ENCODE measurements at regions of chr13 and their contacts with region 1.

Region 1: DNA sequence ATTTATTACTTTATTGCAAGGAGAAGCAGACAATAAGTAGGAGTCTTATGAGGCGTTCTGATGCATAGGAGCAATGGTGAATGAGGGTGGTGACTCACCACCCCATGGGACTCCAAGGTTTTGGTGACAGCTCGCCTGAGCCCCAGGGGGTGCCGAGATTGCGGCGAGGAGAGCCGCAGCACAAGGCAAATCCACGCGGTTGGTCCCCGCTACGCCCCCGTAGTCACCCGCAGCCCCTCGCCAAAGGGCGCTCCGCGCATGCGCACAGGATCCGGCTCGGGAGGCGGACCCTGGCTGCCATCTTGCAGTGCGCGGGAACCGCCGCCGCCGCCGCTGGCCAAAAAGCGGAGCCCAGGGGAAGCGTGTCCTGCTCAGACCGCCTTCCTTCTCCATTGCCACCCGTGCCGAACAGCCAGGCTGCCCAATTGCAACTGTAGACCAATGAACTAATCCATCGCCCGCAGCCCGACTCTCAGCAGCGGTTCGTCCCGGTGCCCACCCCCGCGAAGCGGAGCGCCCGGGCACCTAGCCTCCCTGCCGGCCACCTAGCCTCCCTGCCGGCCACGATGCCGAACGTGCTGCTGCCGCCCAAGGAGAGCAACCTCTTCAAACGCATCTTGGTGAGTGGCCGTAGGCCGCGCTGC is at the start of gene NAA16:
- DNase-seq: peak; percentile 89 to 91 (median 90)
- ATAC-seq: peak; percentile 76
- H3K4me3 ChIP-seq: peak within 1 kb of the TSS; percentile 92 to 99
- H3K27ac ChIP-seq: peak within 1 kb of the TSS; percentile 92 to 98 (median 96)
- H3K4me1 ChIP-seq: peaks cover 56% of the 10 kb centered on the region
- H3K27me3 ChIP-seq: no peaks in the 10 kb centered on the region
- CTCF ChIP-seq: peak in 2 of 7 experiments; percentile 21 to 30
- POLR2A ChIP-seq: peak; percentile 64 to 88 (median 70)
- total RNA-seq, gene NAA16: 47.8 to 50.6 TPM

Region 2: GRCh38 chr13:41065078-41065477 is 246.0 kb before region 1 on chr13:
- intact Hi-C with region 1: loop called (anchors 5 kb)
- DNase-seq: no peak
- ATAC-seq: no peak
- H3K4me3 ChIP-seq: no peak overlapping the region
- H3K27ac ChIP-seq: no peak overlapping the region
- H3K4me1 ChIP-seq: peaks cover 8% of the 10 kb centered on the region
- H3K27me3 ChIP-seq: no peaks in the 10 kb centered on the region
- CTCF ChIP-seq: no peak
- POLR2A ChIP-seq: no peak